K562 (cell line): ENCODE measurements at regions of chr10 and their contacts with region 1.

Region 1: DNA sequence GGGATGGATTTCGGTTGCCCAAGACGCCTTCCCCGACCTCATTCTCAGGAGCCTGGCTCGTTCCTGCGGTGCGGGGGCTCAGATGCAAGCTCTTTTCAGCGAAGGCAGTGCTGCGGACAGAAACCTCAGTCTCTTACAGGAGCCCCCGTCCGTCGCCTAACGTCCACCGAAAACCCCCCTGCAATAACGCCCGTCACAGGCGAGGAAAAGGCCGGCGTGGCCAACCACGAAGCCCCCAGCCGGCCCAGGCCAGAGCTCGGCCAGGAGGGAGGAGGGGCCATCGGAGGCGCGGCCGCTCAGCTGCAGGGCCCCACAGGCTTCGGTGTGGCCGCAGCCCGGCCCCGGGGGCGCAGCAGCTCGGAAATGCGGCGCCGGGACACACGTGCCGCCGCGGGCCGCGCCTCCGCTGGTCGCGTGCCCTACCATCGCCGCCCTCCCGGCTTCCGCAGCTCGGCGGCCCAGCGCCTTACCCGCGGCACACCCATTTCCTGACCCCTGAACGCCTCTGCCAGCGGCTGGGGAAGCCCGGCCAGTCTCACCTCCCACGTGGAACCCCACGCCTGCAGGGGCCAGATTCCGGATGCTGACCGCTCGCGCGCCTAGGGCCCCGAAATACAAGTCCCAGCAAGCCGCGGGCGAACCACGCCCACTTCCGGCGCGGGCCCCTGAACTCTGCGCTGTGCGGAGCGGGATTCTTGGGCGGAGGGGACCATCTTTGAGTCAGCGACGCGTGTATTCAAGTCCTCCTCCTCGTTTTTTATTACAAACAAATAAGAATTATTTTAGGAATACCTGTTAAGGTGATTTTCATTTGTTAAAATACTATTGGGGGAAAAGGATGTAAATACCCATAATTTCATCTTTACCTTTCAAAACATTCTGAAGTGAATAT is at the start of gene ZNF239:
- DNase-seq: peak; percentile 93 to 98 (median 94)
- ATAC-seq: peak; percentile 98
- H3K4me3 ChIP-seq: peak within 1 kb of the TSS; percentile 61
- H3K27ac ChIP-seq: peak within 1 kb of the TSS; percentile 80
- H3K4me1 ChIP-seq: peaks cover 8 to 17% of the 10 kb centered on the region in 2 experiments; a peak in 3 of 5 replicates
- H3K27me3 ChIP-seq: no peaks in the 10 kb centered on the region
- CTCF ChIP-seq: no peak
- EP300 ChIP-seq: peak; percentile 3; the same call in 1 of the 2 replicates
- POLR2A ChIP-seq: peak; percentile 76
- RAD21 ChIP-seq: peak in 1 of 2 experiments; percentile 12; a peak in 1 of 4 replicates
- polyA plus RNA-seq, gene ZNF239: 14.2 to 23.6 TPM

Region 2: DNA sequence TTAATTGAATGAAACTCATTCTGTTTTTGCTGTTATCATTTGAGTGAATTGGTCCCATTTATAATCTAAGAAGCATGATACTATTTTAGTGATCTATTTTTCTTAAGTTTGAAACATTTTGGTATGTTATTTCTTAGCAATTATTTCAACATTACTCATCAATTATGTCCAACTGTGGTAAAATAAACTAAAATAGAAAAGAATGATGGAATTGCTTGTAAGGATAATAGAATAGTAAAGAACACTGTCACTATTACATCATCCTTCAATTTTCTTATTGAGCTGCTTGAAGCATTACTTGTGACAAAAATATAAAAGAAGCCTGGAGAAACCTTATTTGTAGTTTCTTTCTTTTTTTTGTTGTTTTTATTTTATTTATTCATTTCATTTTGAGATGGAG is 95.0 kb before region 1 on chr10:
- CTCF ChIA-PET with region 1: no interaction called
- POLR2A ChIA-PET with region 1: no interaction called
- in situ Hi-C with region 1: no loop called
- intact Hi-C with region 1: loop called (anchors 10 kb)
- DNase-seq: no peak
- ATAC-seq: no peak
- H3K4me3 ChIP-seq: no peak overlapping the region
- H3K27ac ChIP-seq: no peak overlapping the region
- H3K4me1 ChIP-seq: no peaks in the 10 kb centered on the region
- H3K27me3 ChIP-seq: peaks cover 2 to 10% of the 10 kb centered on the region in 2 experiments; a peak in 2 of 5 replicates
- CTCF ChIP-seq: no peak
- EP300 ChIP-seq: no peak
- POLR2A ChIP-seq: no peak
- RAD21 ChIP-seq: no peak

Region 3: DNA sequence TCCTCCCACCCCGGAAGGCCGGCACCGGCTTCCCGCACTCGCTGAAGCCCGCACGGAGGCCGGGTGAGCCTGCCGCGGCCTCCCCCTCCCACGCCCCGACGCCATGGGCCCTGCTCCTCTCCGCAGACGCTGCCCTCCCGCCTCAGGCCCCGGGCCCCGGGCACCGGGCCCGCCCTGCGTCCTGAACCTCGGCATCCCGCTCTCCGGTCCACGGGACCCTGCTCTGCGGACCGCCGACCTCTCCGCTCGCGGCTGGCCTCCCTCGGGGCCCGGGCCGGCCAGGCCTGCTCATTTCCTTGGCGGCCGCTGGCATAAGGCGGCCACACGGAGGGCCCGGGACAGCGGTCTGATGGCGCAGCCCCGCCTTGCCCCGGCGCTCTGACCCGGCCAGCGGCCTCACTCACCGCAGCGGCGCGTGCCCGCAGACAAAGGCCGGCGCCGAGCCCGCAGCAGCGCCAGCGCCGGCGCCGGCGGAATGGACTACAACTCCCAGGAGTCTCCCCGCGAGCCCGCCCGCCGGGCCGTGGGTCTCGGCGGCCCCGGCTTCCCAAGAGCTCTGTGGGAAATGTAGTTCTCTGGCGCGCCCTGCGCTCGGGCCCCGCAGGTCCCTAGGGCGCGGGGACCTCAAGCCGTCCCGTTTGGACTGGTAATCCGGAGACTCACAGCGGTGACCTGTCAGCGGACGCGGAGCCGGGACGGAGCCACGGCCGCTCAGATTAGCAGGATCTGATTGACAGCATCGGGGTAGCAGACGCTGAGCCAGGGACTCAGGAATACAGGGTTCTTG is 74.3 kb after region 1 on chr10 and contains the start of gene ZNF32:
- CTCF ChIA-PET with region 1: no interaction called
- POLR2A ChIA-PET with region 1: no interaction called
- in situ Hi-C with region 1: no loop called
- intact Hi-C with region 1: loop called (anchors 5 kb)
- DNase-seq: peak; percentile 92 to 94 (median 92)
- ATAC-seq: peak; percentile 99
- H3K4me3 ChIP-seq: peak within 1 kb of the TSS; percentile 63
- H3K27ac ChIP-seq: peak within 1 kb of the TSS; percentile 70
- H3K4me1 ChIP-seq: peaks cover 4 to 12% of the 10 kb centered on the region in 2 experiments; a peak in 4 of 5 replicates
- H3K27me3 ChIP-seq: no peaks in the 10 kb centered on the region
- CTCF ChIP-seq: no peak
- EP300 ChIP-seq: no peak
- POLR2A ChIP-seq: peak; percentile 56; the same call in 1 of the 2 replicates
- RAD21 ChIP-seq: no peak
- polyA plus RNA-seq, gene ZNF32: 18.3 to 26.3 TPM